ENCODE measurements at regions of chr11 and their contacts with region 1.

Region 1: GRCh38 chr11:112174789-112175598 is at the start of gene BCO2:
- DNase-seq: peak; percentile 88 to 92 (median 91)
- H3K4me3 ChIP-seq: peak within 1 kb of the TSS in 2 of 3 experiments; percentile 3 to 49
- H3K4me3 Mint-ChIP-seq: peak within 1 kb of the TSS; percentile 67 to 85
- H3K27ac ChIP-seq: peak within 1 kb of the TSS; percentile 7 to 54
- H3K27ac Mint-ChIP-seq: peak within 1 kb of the TSS; percentile 82 to 90 (median 86)
- H3K4me1 ChIP-seq: peaks cover 30 to 31% of the 10 kb centered on the region in 2 donors
- H3K4me1 Mint-ChIP-seq: peaks cover 34% of the 10 kb centered on the region
- H3K27me3 ChIP-seq: no peaks in the 10 kb centered on the region
- H3K27me3 Mint-ChIP-seq: peaks cover 0 to 2% (median 1%) of the 10 kb centered on the region in 3 donors
- CTCF ChIP-seq: peak; percentile 100
- polyA plus RNA-seq, gene BCO2: 0.20 to 1.9 TPM in 2 of 3 donors, not detected in the other

Region 2: GRCh38 chr11:112100462-112100861 is 74.5 kb before region 1 on chr11:
- intact Hi-C with region 1: no loop called
- DNase-seq: no peak
- H3K4me3 ChIP-seq: no peak overlapping the region
- H3K4me3 Mint-ChIP-seq: no peak overlapping the region
- H3K27ac ChIP-seq: peak overlapping the region in 1 of 2 donors; percentile 36
- H3K27ac Mint-ChIP-seq: peak overlapping the region in 2 of 7 donors; percentile 9 to 66
- H3K4me1 ChIP-seq: peaks cover 15 to 18% of the 10 kb centered on the region in 2 donors
- H3K4me1 Mint-ChIP-seq: peaks cover 13% of the 10 kb centered on the region
- H3K27me3 ChIP-seq: no peaks in the 10 kb centered on the region
- H3K27me3 Mint-ChIP-seq: peaks cover 0 to 1% (median 0%) of the 10 kb centered on the region in 3 donors
- CTCF ChIP-seq: no peak

Region 3: GRCh38 chr11:112163875-112164685 is 10.9 kb before region 1 on chr11 and contains the start of gene IL18:
- intact Hi-C with region 1: loop called in 1 of 2 experiments (anchors 2 kb)
- DNase-seq: peak; percentile 52 to 74 (median 55)
- H3K4me3 ChIP-seq: peak within 1 kb of the TSS; percentile 33 to 79 (median 60)
- H3K4me3 Mint-ChIP-seq: peak within 1 kb of the TSS; percentile 81 to 94
- H3K27ac ChIP-seq: peak within 1 kb of the TSS; percentile 82
- H3K27ac Mint-ChIP-seq: peak within 1 kb of the TSS; percentile 87 to 94 (median 92)
- H3K4me1 ChIP-seq: peaks cover 55 to 68% of the 10 kb centered on the region in 2 donors
- H3K4me1 Mint-ChIP-seq: peaks cover 60% of the 10 kb centered on the region
- H3K27me3 ChIP-seq: no peaks in the 10 kb centered on the region
- H3K27me3 Mint-ChIP-seq: peaks cover 0 to 1% (median 0%) of the 10 kb centered on the region in 3 donors
- CTCF ChIP-seq: no peak
- polyA plus RNA-seq, gene IL18: 11.7 to 16.2 (median 16.1) TPM

Region 4: DNA sequence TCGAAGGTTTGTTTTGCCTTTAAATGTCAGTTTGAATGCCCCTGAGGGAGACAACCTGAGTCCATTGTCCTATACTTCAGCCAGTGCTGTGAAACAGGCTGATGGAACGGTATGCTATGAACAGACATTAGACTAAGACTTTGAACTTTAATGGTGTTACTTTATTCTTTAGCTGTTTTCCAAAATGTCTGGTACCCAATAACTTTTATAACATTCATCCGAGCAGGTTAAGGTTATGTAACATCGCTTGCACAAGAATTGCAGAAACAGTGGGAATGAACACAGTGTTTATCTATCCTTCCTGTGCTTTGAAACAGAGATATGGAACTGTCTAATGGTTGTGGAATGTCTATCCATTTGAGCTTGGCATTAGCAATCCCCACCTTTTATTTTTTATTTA is 38.8 kb after region 1 on chr11:
- intact Hi-C with region 1: no loop called
- DNase-seq: no peak
- H3K4me3 ChIP-seq: no peak overlapping the region
- H3K4me3 Mint-ChIP-seq: no peak overlapping the region
- H3K27ac ChIP-seq: no peak overlapping the region
- H3K27ac Mint-ChIP-seq: no peak overlapping the region
- H3K4me1 ChIP-seq: no peaks in the 10 kb centered on the region
- H3K4me1 Mint-ChIP-seq: peaks cover 23% of the 10 kb centered on the region
- H3K27me3 ChIP-seq: no peaks in the 10 kb centered on the region
- H3K27me3 Mint-ChIP-seq: peaks cover 0 to 8% (median 0%) of the 10 kb centered on the region in 3 donors
- CTCF ChIP-seq: no peak

Measured in CD14-positive monocyte (primary cell).